Sigmoid colon (tissue), 7 donors: ENCODE measurements at regions of chr4 and their contacts with region 1.

Region 1: GRCh38 chr4:145618932-145619638 is at the start of gene MMAA:
- DNase-seq: peak; percentile 97
- H3K4me3 ChIP-seq: peak within 1 kb of the TSS; percentile 71 to 89 (median 87)
- H3K27ac ChIP-seq: peak within 1 kb of the TSS; percentile 94 to 98 (median 96)
- H3K4me1 ChIP-seq: peaks cover 0 to 27% (median 12%) of the 10 kb centered on the region in 4 donors
- H3K27me3 ChIP-seq: no peaks in the 10 kb centered on the region
- CTCF ChIP-seq: peak; percentile 13 to 53 (median 48)
- EP300 ChIP-seq: peak in 1 of 4 donors; percentile 13
- POLR2A ChIP-seq: peak; percentile 94
- total RNA-seq, gene MMAA: 2.5 to 6.6 (median 2.7) TPM

Region 2: GRCh38 chr4:145180298-145181090 is 438.6 kb before region 1 on chr4 and contains the start of gene OTUD4:
- intact Hi-C with region 1: loop called (anchors 2 kb)
- DNase-seq: peak; percentile 98
- H3K4me3 ChIP-seq: peak within 1 kb of the TSS; percentile 85 to 98 (median 91)
- H3K27ac ChIP-seq: peak within 1 kb of the TSS; percentile 97 to 99 (median 98)
- H3K4me1 ChIP-seq: peaks cover 0 to 40% (median 32%) of the 10 kb centered on the region in 4 donors
- H3K27me3 ChIP-seq: no peaks in the 10 kb centered on the region
- CTCF ChIP-seq: no peak
- EP300 ChIP-seq: no peak
- POLR2A ChIP-seq: peak; percentile 61 to 67
- total RNA-seq, gene OTUD4: 27.7 to 31.7 (median 29.8) TPM

Region 3: GRCh38 chr4:145446184-145446583 is 172.9 kb before region 1 on chr4:
- intact Hi-C with region 1: no loop called
- DNase-seq: no peak
- H3K4me3 ChIP-seq: no peak overlapping the region
- H3K27ac ChIP-seq: no peak overlapping the region
- H3K4me1 ChIP-seq: no peaks in the 10 kb centered on the region
- H3K27me3 ChIP-seq: no peaks in the 10 kb centered on the region
- CTCF ChIP-seq: no peak
- EP300 ChIP-seq: no peak
- POLR2A ChIP-seq: no peak

Region 4: DNA sequence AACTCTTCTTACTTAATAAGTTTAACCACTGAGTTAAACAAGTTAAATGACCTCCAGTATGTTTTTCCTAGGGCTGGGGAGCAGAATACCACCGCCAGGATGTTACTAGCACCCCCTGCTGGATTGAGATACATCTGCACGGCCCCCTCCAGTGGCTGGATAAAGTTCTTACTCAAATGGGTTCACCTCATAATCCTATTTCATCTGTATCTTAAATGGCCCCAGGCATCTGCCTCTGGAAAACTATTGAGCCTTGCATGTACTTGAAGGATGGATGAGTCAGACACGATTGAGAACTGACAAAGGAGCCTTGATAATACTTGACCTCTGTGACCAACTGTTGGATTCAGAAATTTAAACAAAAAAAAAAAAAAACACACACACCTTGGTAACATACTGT is 61.4 kb before region 1 on chr4:
- intact Hi-C with region 1: loop called (anchors 5 kb)
- DNase-seq: peak; percentile 79
- H3K4me3 ChIP-seq: no peak overlapping the region
- H3K27ac ChIP-seq: no peak overlapping the region
- H3K4me1 ChIP-seq: peaks cover 0 to 3% (median 0%) of the 10 kb centered on the region in 4 donors
- H3K27me3 ChIP-seq: no peaks in the 10 kb centered on the region
- CTCF ChIP-seq: peak; percentile 50 to 91 (median 79)
- EP300 ChIP-seq: no peak
- POLR2A ChIP-seq: no peak

Region 5: DNA sequence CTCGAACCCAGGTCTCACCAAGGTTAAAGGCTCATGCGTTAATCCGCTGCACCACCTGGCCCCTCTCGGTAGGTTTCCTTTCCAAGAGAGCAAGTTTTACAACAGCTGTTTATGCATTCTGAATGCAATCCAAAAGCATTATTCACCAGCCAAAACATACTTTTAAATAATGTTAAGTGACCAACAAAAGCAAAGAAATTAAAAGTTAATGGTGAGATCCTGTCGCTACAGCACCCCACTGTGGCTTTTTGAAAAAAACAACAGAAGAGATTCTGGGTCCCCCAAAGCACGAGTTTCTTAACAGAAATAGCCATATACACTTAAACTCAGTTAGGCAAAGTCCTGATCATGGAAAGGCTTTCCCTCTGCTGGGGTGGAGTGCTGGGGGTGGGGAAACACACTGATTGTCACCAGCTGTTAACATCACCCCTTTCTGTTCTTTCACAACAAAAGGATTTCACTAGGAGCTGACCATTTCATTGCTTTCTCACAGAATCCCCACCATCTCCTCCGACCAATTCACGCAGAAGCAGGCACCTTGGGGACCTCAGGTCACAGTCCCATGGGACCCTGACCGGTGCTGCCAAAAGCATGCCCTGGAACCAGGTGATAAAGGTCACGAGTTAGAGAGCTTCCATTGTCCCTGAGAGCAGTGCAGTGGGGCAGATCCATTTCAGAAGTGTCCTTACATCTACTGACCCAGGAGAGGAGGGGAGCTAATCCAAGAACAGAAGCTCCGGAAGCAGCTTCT is 268.3 kb after region 1 on chr4:
- intact Hi-C with region 1: loop called (anchors 10 kb)
- DNase-seq: peak; percentile 83
- H3K4me3 ChIP-seq: no peak overlapping the region
- H3K27ac ChIP-seq: peak overlapping the region; percentile 52 to 71 (median 68)
- H3K4me1 ChIP-seq: peaks cover 0 to 27% (median 22%) of the 10 kb centered on the region in 4 donors
- H3K27me3 ChIP-seq: no peaks in the 10 kb centered on the region
- CTCF ChIP-seq: no peak
- EP300 ChIP-seq: no peak
- POLR2A ChIP-seq: no peak

Region 6: DNA sequence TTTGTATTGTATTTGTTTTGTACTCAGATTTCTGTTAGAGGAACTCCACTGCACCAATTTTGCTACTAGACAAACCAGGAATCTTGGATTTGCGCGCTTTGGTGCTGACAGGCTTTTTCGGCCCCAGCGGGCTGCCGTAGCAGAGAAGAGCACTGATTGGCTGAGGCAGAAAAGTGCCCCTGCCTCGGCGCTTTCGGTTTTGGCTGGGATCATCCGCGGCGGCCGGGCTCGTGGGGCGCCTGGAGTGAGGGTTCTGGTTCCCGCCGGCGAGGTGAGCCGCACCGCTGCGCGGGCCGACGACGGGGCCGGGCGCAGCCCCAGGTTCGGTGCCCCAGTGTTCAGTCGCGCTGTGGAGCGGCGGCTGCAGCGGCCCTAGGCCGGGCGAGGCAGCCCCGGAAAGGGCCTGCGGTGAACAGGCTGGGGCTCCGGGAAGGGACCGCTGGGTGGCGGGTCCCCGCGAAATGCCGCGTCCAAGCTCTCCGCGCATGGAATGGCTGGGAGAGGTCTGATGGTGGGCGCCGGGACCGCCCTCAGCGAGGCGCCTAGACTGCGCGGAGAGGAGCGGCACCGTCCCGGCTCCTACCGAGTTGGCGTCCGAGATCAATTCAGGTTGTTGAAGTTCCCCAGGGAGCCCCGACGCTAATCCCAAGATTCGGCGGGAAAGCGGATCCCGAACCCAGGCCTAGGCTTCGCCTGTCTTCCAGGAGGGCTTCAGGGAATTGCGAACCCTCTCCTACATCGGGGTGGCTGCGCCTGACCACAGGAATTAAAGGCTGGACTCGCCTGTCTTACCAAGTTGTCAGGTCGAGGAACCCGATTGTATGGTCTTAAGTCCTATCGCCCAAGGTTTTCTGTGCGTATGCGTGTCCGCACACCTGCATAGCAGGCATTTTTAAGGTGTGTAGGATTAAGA is 556.7 kb after region 1 on chr4 and contains the start of gene LSM6:
- intact Hi-C with region 1: loop called (anchors 2 kb)
- DNase-seq: peak; percentile 91
- H3K4me3 ChIP-seq: peak within 1 kb of the TSS; percentile 87 to 92 (median 88)
- H3K27ac ChIP-seq: peak within 1 kb of the TSS; percentile 93 to 95 (median 93)
- H3K4me1 ChIP-seq: peaks cover 0 to 42% (median 33%) of the 10 kb centered on the region in 4 donors
- H3K27me3 ChIP-seq: no peaks in the 10 kb centered on the region
- CTCF ChIP-seq: no peak
- EP300 ChIP-seq: peak in 2 of 4 donors; percentile 13 to 33
- POLR2A ChIP-seq: peak in 1 of 2 donors; percentile 15
- total RNA-seq, gene LSM6: 16.9 to 51.5 (median 32.4) TPM